HCT116 (cell line): ENCODE measurements at regions of chr15 and their contacts with region 1.

Region 1: DNA sequence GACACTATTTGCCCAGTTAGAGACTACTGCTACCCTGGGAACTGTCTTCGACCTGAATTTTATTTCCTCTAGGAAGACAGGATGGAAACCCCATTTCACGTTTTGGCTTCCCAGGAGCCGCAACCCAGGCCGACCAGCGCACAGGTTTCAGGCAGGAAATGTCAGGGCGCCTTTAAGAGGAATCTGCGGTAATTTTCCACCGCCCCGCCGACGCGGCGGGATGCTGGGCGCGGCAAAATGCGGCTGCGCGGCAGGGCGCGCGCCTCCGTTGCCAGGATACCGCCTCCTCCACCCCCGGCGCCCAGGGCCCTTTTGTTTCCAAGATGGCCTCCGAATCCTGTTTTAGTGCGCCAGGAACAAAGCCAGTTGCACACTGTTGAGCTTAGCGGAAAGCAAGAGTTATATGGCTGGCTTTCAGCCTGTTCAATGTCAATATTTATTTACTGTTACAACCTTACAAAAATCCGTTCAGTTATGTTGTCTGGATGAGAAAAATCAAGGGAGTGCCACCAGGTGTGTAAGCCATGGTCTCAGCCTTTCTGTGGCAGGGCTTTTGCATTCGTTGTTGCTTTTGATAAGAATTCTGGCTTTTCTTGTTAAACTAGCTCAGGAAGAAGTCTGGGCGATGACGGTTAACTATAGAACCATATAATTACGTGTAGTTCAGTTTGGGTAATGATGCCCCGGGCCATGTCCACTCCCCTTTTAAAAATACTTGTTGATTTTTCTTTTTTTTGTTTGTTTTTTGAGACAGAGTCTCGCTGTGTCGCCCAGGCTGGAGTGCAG is 79.7 kb upstream of the CHD2 start:
- DNase-seq: peak; percentile 83
- ATAC-seq: peak; percentile 77
- H3K4me3 ChIP-seq: peak overlapping the region; percentile 57 to 58
- H3K27ac ChIP-seq: peak overlapping the region; percentile 83
- H3K4me1 ChIP-seq: peaks cover 41 to 66% of the 10 kb centered on the region in 2 experiments
- H3K27me3 ChIP-seq: no peaks in the 10 kb centered on the region
- CTCF ChIP-seq: no peak
- POLR2A ChIP-seq: peak; percentile 79
- RAD21 ChIP-seq: no peak; the same call in 1 of the 2 replicates

Region 2: DNA sequence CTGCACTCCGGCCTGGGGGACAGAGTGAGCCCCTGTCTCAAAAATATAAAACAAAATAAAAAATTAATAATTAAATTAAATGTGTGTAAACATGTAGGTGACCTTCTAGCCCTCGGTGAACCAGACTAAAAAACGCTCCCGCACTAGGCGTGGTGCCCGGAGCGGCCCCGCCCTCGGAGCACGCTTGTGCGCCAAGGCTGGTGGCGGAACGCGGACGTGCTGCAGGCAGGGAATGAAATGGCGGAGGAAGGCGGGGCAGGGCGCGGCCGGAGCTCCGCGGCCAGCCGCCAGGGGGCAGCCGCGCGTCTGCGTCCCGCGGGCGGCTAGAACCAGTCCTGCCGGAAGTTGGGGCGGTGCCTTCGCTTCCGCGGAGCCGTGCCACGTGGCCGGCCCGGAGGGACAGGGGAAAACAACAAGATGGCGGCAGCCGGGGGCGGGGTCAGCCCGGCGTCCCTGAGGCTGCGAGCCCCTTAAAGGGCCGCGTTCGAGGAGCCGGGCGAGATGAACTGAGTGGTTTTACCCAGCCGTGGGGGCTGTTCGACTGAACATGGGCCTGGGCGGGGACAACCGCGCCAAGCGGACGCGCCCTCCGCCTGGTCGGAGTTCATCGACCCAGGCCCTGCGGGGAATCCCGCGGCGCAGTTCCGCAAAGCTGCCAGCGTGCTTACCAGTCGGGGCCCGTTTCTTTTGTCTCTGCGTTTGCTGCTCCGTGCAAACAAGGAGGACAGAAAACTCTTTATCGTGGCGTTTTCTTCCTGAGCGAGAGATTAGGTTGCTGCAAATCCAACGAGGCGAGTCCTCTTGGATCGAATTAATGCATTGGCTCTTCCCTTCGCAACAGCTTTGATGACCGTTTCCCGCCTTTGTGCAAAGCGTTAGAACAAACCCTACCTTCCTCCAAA is 11.2 kb before region 1 on chr15:
- CTCF ChIA-PET with region 1: interaction called, 11 read pairs
- POLR2A ChIA-PET with region 1: interaction called, 31 read pairs
- RAD21 ChIA-PET with region 1: no interaction called
- intact Hi-C with region 1: loop called (anchors 2 kb)
- DNase-seq: peak; percentile 83
- ATAC-seq: peak; percentile 81
- H3K4me3 ChIP-seq: peak overlapping the region; percentile 39 to 58
- H3K27ac ChIP-seq: peak overlapping the region; percentile 77
- H3K4me1 ChIP-seq: peaks cover 48 to 69% of the 10 kb centered on the region in 2 experiments
- H3K27me3 ChIP-seq: no peaks in the 10 kb centered on the region
- CTCF ChIP-seq: peak in 2 of 3 experiments; percentile 85 to 92; a peak in 4 of 6 replicates
- POLR2A ChIP-seq: peak; percentile 79
- RAD21 ChIP-seq: no peak

Region 3: DNA sequence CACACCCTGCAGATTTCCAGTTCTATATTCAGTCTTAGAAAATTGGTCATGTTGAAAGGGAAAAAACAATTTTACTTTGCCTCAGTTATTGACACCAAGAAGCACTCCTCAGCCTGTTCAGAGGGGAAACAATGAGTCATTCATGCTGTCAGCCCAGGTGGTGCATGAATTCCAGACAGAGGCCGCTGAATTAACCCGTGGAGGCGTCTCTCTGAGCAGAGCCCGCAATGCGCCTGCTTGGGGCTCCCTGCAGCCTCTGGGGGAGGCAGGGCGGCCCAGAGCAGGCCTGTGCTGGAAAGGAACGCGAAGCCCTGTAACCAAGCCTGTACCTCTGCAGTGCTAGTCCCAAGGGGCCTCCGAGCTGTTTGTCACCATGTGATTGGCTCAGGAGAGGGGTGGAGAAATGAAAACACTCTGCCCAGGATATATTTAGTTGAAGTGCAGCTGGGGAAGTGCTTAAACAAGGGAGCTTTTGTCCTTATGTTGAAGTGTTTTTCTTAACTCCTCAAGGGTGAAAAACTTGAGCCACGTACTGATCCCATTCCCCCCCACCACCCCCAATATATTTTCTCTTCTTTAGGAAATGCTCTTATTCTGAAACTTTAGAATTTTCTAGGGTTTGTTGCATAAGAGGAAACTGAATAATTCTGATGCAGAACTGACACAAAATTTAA is 11.4 kb after region 1 on chr15:
- CTCF ChIA-PET with region 1: no interaction called
- POLR2A ChIA-PET with region 1: interaction called, 37 read pairs
- RAD21 ChIA-PET with region 1: no interaction called
- intact Hi-C with region 1: loop called (anchors 1 kb)
- DNase-seq: peak; percentile 95
- ATAC-seq: peak; percentile 99
- H3K4me3 ChIP-seq: peak overlapping the region in 1 of 2 experiments; percentile 21
- H3K27ac ChIP-seq: peak overlapping the region; percentile 92
- H3K4me1 ChIP-seq: peaks cover 26 to 32% of the 10 kb centered on the region in 2 experiments
- H3K27me3 ChIP-seq: no peaks in the 10 kb centered on the region
- CTCF ChIP-seq: no peak
- POLR2A ChIP-seq: no peak
- RAD21 ChIP-seq: peak; percentile 43; the same call in 1 of the 2 replicates

Region 4: DNA sequence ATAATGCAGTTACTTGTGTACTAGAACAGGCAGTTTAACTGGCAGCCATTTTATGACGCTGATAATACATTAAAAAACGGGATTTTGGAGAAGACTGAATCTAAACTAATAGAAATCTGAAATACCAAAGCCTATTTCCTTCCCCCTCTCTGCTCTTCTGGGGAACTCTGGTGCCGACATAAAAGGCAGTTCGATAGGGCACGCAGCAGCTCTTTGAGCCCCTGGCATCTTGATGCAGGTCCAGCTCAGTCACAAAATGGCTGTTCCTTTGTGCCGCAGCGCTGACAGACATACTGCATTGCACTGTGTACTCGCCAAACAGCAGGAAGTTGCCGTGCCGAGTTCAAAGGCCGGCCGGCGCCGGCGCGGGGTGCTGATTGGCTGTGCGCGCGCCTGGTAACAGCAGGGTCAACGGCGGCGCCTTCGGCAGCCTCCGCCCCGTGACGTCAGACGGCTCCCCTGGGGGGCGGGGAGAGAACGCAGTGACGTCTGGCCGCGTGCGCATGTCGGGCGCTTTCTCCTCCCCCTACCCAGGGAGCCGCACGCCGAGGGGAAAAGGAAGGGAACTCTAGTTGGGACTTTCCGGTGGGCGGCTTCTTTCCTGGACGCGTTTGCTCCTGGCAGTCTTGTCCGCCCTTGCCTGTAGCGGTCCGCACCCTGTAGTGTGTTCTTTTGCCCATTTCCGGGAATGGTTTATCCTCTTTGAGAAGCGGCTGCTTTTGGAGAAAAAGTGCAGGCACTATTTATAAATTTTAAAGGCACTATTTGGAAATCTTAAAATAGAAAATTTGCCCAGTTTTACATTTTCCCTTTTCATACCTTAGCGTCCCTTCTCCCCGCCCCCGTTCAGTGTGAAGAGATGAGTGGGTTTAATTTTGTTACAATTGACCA is 83.8 kb after region 1 on chr15:
- CTCF ChIA-PET with region 1: interaction called, 3 read pairs
- POLR2A ChIA-PET with region 1: interaction called, 10 read pairs
- RAD21 ChIA-PET with region 1: no interaction called
- intact Hi-C with region 1: loop called (anchors 5 kb)
- DNase-seq: peak; percentile 96
- ATAC-seq: peak; percentile 86
- H3K4me3 ChIP-seq: peak overlapping the region; percentile 69 to 72
- H3K27ac ChIP-seq: peak overlapping the region; percentile 97
- H3K4me1 ChIP-seq: peaks cover 48 to 70% of the 10 kb centered on the region in 2 experiments
- H3K27me3 ChIP-seq: no peaks in the 10 kb centered on the region
- CTCF ChIP-seq: no peak
- POLR2A ChIP-seq: peak; percentile 37
- RAD21 ChIP-seq: 0 out of 2 replicates have a peak, but pooled peaks have one; percentile 21